AG04449 (cell line): ENCODE measurements at regions of chr10 and their contacts with region 1.

Region 1: GRCh38 chr10:210297-210696 is 75.0 kb downstream of the ZMYND11 start:
- DNase-seq: no peak
- H3K4me3 ChIP-seq: no peak overlapping the region
- CTCF ChIP-seq: no peak

Region 2: GRCh38 chr10:194281-194680 is 16.0 kb before region 1 on chr10:
- CTCF ChIA-PET with region 1: no interaction called
- POLR2A ChIA-PET with region 1: no interaction called
- DNase-seq: no peak
- H3K4me3 ChIP-seq: no peak overlapping the region
- CTCF ChIP-seq: no peak

Region 3: DNA sequence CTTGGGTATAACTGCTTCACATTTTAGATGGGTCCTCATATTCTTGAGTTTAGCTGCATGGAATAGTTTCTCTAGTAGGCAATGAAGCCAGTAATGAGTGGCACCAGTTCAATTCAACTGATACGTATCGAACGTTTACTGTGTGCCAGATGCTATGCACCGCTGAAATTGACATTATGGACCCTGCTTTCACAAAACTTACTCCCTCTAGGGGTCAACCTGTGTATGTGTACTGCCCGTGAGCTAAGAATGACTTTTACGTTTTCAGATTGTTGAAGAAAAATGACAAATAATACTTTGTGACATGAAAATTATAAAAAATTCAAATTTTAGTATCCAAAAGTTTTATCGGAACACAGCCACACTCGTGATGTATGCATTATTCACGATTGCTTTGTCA is 20.4 kb after region 1 on chr10:
- CTCF ChIA-PET with region 1: interaction called, 11 read pairs
- POLR2A ChIA-PET with region 1: no interaction called
- DNase-seq: no peak
- H3K4me3 ChIP-seq: no peak overlapping the region
- CTCF ChIP-seq: peak; percentile 17